ENCODE measurements at regions of chr10 and their contacts with region 1.

Region 1: GRCh38 chr10:7559386-7559785 is 107.4 kb downstream of the ITIH5 start:
- DNase-seq: no peak
- H3K4me3 ChIP-seq: no peak overlapping the region
- H3K27ac ChIP-seq: no peak overlapping the region
- H3K4me1 ChIP-seq: no peaks in the 10 kb centered on the region
- H3K27me3 ChIP-seq: no peaks in the 10 kb centered on the region
- CTCF ChIP-seq: no peak
- POLR2A ChIP-seq: no peak

Region 2: GRCh38 chr10:7445474-7446185 is 113.8 kb before region 1 on chr10:
- CTCF ChIA-PET with region 1: no interaction called
- POLR2A ChIA-PET with region 1: no interaction called
- dilution Hi-C with region 1: no loop called
- intact Hi-C with region 1: no loop called
- DNase-seq: no peak
- H3K4me3 ChIP-seq: no peak overlapping the region
- H3K27ac ChIP-seq: no peak overlapping the region
- H3K4me1 ChIP-seq: no peaks in the 10 kb centered on the region
- H3K27me3 ChIP-seq: no peaks in the 10 kb centered on the region
- CTCF ChIP-seq: no peak
- POLR2A ChIP-seq: no peak

Region 3: DNA sequence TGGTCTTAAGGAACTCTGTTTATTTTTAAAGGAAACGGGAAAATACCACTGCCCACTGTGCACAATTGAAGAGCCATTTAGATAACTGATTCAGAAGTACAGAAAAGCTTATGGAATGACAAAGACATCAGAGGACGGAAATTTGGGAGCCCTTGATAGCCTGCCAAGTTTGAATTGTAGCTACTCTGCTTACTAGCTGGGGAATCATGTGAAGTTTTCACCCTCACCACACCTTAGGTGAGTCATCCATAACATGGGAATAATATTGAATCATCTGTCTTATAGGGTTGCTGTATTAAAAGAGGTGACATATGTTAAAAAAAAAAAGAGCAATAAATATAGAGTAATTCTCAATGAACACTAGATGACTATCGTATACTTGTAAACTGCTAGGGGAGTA is 1599.3 kb after region 1 on chr10:
- CTCF ChIA-PET with region 1: no interaction called
- POLR2A ChIA-PET with region 1: no interaction called
- dilution Hi-C with region 1: no loop called
- intact Hi-C with region 1: loop called (anchors 5 kb)
- DNase-seq: no peak
- H3K4me3 ChIP-seq: no peak overlapping the region
- H3K27ac ChIP-seq: no peak overlapping the region
- H3K4me1 ChIP-seq: no peaks in the 10 kb centered on the region
- H3K27me3 ChIP-seq: no peaks in the 10 kb centered on the region
- CTCF ChIP-seq: no peak
- POLR2A ChIP-seq: no peak

Measured in endothelial cell of umbilical vein (primary cell).